Gastrocnemius medialis (tissue), 4 donors: ENCODE measurements at regions of chr10 and their contacts with region 1.

Region 1: DNA sequence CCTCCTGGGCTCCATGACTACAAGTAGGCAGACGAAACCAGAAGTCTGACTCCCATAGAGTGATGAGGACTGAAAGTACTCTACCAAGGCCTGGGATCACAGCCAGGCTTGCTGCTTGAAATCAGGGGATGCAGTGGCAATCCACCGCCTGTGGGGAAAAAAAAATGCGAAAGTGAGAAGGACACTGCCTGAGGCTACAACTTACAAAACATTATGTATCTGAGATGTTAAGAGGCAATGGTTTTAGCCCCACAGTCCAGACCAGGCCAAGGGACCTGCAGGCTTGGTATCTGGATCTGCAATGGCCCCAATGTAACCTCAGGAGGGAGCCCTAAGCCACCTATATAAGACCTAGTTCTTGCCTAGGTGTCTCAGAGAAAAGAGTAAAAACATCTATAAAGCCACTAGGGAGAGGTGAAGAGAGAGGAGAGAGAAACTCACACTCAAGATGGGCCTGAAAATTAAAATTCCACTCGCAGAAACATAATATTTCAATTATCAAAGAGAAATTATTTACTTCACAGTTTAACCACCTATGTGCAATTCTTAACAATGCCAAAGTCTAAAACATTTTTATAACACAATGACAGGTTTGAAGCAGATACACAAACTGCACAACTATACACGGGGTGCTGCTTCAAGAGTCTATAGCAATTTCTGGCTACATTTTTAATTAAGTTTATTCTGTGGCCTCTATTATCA is 13.9 kb downstream of the DNAJC1 start:
- DNase-seq: no peak
- ATAC-seq: peak; percentile 60 to 73
- H3K4me3 ChIP-seq: no peak overlapping the region
- H3K27ac ChIP-seq: no peak overlapping the region
- H3K4me1 ChIP-seq: no peaks in the 10 kb centered on the region
- H3K27me3 ChIP-seq: no peaks in the 10 kb centered on the region
- CTCF ChIP-seq: peak in 4 of 5 experiments; percentile 9 to 57 (median 33)
- POLR2A ChIP-seq: no peak

Region 2: GRCh38 chr10:22103701-22104470 is 114.3 kb after region 1 on chr10:
- in situ Hi-C with region 1: no loop called
- intact Hi-C with region 1: no loop called
- DNase-seq: no peak
- ATAC-seq: no peak
- H3K4me3 ChIP-seq: no peak overlapping the region
- H3K27ac ChIP-seq: no peak overlapping the region
- H3K4me1 ChIP-seq: no peaks in the 10 kb centered on the region
- H3K27me3 ChIP-seq: no peaks in the 10 kb centered on the region
- CTCF ChIP-seq: no peak
- POLR2A ChIP-seq: no peak

Region 3: DNA sequence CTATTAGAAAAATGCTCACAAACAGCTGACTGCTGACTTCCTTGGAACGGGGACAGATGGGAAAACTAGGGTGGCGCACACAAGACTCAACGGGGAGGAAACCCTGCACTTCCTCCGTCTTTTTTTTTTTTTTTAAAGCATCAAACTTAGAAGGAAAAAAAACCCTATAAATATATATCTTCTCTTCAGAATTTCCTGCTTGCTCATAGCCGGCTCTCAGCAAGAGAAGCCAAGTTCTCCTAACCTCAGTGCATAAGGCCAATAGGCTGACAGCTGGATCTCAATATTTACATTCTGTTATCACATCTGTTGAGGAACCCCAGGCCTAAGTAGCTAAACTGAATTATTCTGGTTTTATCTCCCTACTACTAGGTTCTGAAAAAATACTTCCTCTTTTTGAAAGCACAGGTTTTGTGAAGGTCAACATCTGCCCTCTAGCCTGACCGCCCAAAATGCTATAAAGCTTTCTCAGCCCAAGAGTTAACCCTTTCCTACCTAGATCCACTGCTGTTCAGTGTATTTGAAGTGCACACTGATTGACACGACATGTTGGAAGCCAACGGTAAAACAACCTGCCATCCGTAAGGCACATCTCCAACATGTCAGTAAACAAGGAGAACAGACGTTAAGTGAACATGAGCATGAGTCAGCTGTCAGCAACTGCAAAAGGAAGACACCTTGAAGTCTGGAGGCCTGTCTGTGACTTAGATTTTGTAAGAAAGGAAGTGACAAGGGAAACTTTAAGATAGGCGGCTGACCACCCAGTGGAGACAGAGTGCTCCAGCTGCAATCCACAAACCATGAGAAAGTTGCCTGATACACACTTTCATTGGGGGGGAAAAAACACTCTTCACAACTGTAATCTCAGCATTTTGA is 144.4 kb after region 1 on chr10:
- in situ Hi-C with region 1: no loop called
- intact Hi-C with region 1: no loop called
- DNase-seq: no peak
- ATAC-seq: no peak
- H3K4me3 ChIP-seq: no peak overlapping the region
- H3K27ac ChIP-seq: no peak overlapping the region
- H3K4me1 ChIP-seq: no peaks in the 10 kb centered on the region
- H3K27me3 ChIP-seq: no peaks in the 10 kb centered on the region
- CTCF ChIP-seq: no peak
- POLR2A ChIP-seq: no peak

Region 4: DNA sequence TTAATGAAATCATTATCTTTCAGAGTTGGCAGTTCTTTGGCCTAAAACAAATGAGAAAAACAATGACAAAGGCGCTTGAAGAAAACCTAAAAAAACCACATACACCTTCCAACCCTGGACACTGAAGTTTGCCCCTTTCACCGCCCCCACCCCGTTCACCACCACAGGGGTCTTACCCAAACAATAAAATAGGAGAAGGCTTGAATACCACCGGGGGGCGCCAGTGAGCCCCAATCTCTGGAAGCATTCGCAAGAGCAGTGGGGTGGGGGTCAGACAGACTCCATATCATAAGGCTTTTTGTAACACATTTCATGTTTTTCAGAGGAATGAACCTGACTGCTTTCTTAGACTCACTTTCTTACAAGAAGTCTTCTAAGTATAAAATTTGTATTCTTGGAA is 561.1 kb after region 1 on chr10:
- in situ Hi-C with region 1: loop called in 2 of 4 experiments (anchors 25 kb)
- intact Hi-C with region 1: no loop called
- DNase-seq: peak in 1 of 2 donors; percentile 34
- ATAC-seq: no peak
- H3K4me3 ChIP-seq: no peak overlapping the region
- H3K27ac ChIP-seq: peak overlapping the region in 2 of 4 donors; percentile 76 to 83
- H3K4me1 ChIP-seq: peaks cover 33 to 35% of the 10 kb centered on the region in 2 donors
- H3K27me3 ChIP-seq: no peaks in the 10 kb centered on the region
- CTCF ChIP-seq: peak; percentile 29 to 54 (median 47)
- POLR2A ChIP-seq: no peak

Region 5: DNA sequence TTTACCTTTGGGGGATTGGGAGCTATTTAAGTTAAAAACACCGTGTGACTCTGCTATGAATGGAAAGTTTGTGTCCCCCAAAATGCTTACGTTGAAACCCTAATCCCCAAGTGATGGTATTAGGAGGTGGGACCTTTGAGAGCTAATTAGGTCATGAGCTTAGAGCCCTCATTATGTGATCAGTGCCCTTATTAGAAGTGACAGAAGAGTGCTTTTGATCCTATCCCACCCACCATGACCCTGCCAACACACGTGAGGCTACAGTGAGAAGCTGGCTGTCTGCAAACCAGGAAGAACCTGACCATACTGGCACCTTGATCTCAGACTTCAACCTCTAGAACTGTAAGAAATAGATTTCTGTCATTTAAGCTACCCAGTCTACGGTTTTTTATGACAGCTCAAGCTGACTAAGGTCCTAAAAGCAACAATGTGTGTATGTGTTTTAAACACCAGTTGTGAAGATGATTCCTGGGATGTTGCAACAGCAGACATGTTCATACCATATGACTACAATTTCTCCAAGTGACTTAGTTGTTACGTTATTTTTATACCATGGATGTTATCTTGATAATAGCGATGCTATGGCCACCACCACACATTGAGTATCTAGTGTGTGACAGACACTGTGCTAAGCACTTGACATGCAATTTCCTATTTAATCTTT is 600.4 kb after region 1 on chr10:
- in situ Hi-C with region 1: loop called in 2 of 4 experiments (anchors 10 to 25 kb)
- intact Hi-C with region 1: loop called (anchors 5 kb)
- DNase-seq: no peak
- ATAC-seq: no peak
- H3K4me3 ChIP-seq: no peak overlapping the region
- H3K27ac ChIP-seq: no peak overlapping the region
- H3K4me1 ChIP-seq: no peaks in the 10 kb centered on the region
- H3K27me3 ChIP-seq: no peaks in the 10 kb centered on the region
- CTCF ChIP-seq: no peak
- POLR2A ChIP-seq: no peak

Region 6: DNA sequence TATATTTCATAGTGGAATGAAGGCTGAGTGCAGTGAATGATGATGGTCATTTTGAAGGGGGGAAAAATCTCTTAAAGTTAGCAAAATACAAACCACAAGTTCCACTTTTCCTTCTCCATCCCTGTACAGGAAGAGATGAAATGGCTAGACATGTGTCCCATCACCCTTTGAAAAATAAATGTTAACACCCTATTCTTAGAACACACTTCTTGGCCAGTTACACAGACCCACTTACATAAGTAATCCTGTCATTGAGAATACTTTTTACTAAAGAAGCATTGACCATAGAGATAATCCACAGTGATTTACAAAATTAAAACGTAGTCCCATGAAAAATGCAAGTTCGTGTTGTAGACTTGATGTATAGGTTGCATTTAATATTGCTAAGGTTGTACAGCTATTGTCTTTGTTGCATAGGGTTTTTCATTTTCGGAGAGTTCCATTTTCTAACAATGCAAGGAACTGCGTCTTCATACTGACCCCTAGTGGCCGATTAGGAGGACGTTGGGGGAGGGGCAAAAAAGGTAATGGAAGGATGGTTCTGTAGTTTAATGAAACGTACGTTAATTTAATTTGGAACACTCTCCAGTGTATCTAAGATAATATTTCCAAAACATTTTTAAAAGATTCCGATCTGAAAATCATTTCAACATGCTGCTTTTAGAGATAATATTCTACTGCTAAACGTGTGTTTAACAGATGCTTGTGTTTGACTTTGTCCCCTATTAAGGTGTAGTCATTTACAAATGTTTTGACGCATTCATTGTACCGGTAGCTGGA is 999.2 kb after region 1 on chr10:
- in situ Hi-C with region 1: loop called (anchors 5 to 25 kb)
- intact Hi-C with region 1: no loop called
- DNase-seq: peak; percentile 32 to 35
- ATAC-seq: peak; percentile 71 to 77
- H3K4me3 ChIP-seq: no peak overlapping the region
- H3K27ac ChIP-seq: no peak overlapping the region
- H3K4me1 ChIP-seq: peaks cover 0 to 4% of the 10 kb centered on the region in 2 donors
- H3K27me3 ChIP-seq: no peaks in the 10 kb centered on the region
- CTCF ChIP-seq: peak; percentile 78 to 90 (median 85)
- POLR2A ChIP-seq: no peak

Region 7: GRCh38 chr10:23047201-23048050 is 1057.8 kb after region 1 on chr10:
- in situ Hi-C with region 1: no loop called
- intact Hi-C with region 1: no loop called
- DNase-seq: no peak
- ATAC-seq: no peak
- H3K4me3 ChIP-seq: no peak overlapping the region
- H3K27ac ChIP-seq: no peak overlapping the region
- H3K4me1 ChIP-seq: peaks cover 0 to 8% of the 10 kb centered on the region in 2 donors
- H3K27me3 ChIP-seq: no peaks in the 10 kb centered on the region
- CTCF ChIP-seq: no peak
- POLR2A ChIP-seq: no peak